Left lung (tissue), 14 donors: ENCODE measurements at regions of chr6 and their contacts with region 1.

Region 1: DNA sequence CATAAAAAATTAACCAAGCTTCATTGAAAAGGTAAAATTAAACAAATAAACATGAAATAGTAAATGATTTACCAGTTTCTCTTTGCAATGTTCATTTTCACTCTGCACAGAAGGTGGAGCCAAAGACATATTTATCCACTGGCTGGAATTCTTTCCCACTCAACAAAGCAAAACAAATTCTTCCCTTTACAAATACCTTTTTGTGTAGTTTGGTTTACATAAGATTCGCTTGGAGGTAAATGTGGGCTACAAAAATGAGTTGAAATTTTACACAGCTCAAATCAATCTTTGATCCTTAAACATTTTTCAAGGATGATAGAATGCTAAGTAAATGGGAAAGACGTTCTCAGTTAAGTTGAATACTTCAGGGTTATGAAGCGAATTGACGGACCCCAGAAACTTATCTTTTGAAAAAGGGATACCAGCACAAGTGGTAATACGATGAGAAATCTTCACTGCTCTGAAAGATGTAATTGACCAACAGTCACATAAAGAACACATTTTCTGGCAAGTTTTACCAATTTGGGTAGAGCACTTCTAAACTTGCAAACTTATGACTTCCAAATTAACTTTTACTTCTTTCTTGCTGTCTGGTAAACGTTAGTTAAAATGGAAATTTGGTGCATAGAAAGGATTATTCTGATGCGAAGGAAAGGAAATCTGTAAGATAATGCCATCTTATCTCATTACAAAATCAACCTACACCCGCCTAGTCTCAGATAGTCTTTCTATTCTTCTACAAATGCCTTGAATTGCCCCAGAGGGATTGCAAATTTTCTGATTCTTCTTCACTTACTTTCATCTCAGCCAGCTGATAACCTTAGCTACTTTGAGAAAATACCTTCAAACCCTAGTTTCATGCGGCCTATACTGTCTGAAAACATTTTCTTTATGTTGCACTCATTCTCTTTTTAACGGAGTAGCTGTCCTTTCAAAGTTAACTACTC is 4.7 kb upstream of the GJA1 start:
- DNase-seq: peak in 2 of 4 donors; percentile 42 to 57
- ATAC-seq: peak; percentile 75
- H3K4me3 ChIP-seq: no peak overlapping the region
- H3K27ac ChIP-seq: no peak overlapping the region
- H3K4me1 ChIP-seq: no peaks in the 10 kb centered on the region
- H3K27me3 ChIP-seq: peaks cover 0 to 8% of the 10 kb centered on the region in 2 donors
- CTCF ChIP-seq: peak; percentile 46 to 61

Region 2: GRCh38 chr6:121020656-121021055 is 410.1 kb before region 1 on chr6:
- intact Hi-C with region 1: no loop called
- DNase-seq: no peak
- ATAC-seq: no peak
- H3K4me3 ChIP-seq: no peak overlapping the region
- H3K27ac ChIP-seq: no peak overlapping the region
- H3K4me1 ChIP-seq: no peaks in the 10 kb centered on the region
- H3K27me3 ChIP-seq: no peaks in the 10 kb centered on the region
- CTCF ChIP-seq: no peak

Region 3: DNA sequence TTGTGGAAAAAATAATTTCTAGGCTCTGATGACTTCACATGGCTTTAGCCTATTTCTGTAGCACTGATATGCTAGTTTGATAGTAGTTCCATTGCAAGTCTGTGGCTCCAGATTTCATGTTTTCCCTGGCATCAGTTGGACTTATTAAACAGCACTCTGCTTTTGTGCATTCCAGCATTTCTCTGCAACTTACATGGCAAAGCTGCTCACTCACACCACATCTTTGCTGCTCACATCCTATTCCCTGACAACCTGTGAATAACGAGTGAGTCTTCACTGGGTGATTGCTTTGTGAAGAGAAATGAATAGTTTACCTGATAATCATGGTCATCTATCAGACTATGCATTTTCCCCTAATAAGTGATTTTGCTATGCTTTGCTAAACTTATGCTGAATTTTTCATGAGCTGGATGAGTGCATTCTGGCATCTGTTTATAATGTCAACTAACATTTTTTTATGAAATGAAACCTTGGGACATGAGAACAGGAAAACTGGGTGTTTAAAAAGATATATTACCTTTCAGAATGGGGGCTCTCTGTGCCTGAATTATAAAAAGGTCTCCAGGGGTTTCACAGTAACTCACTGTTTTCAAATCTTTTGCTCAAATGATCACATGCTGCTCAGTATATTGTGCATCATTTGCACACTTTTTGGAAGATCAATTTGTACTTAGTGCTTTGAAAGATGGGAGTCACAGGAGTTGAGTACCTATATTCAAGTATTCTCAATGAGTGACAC is 398.4 kb before region 1 on chr6:
- intact Hi-C with region 1: no loop called
- DNase-seq: no peak
- ATAC-seq: no peak
- H3K4me3 ChIP-seq: no peak overlapping the region
- H3K27ac ChIP-seq: no peak overlapping the region
- H3K4me1 ChIP-seq: no peaks in the 10 kb centered on the region
- H3K27me3 ChIP-seq: no peaks in the 10 kb centered on the region
- CTCF ChIP-seq: no peak

Region 4: DNA sequence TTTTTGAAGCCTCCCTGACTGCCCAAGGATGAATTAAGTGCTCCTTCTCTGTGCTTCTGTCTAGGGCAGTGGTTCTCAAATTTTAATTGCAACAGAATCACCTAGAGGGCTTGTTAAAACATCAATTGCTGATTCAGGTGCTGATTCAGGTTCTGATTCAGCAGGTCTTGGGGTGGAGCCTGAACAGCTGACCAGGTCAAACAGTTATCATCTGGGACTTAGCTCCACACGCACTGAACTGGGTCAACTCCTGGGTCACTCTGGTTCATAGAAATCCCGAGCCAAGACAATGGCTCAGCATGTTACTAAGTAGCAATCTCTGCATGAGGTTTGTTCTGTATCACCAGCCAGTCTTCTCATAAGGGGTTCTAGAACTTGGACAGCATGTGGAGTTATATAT is 197.0 kb after region 1 on chr6:
- intact Hi-C with region 1: no loop called
- DNase-seq: no peak
- ATAC-seq: no peak
- H3K4me3 ChIP-seq: no peak overlapping the region
- H3K27ac ChIP-seq: no peak overlapping the region
- H3K4me1 ChIP-seq: no peaks in the 10 kb centered on the region
- H3K27me3 ChIP-seq: no peaks in the 10 kb centered on the region
- CTCF ChIP-seq: no peak

Region 5: DNA sequence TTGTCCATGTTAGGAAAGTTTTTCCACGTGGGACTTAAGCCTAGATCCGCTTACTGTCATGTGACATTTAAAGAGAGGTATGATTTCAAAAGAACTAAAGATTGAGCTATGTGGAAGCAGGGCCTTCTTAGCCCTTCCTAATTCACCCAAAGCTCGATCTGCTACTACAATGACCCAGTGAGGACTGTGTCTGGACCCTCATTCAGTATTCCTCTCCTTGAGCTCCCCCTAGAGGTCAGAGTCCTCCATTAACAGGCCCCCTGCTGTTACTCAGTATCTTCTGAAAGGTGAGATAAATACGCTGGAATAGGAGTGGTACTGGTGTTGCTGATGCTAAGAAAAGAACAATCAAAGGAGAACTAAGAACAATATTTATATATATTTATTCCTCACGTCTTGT is 418.7 kb after region 1 on chr6:
- intact Hi-C with region 1: loop called in 1 of 2 experiments (anchors 5 kb)
- DNase-seq: peak in 2 of 4 donors; percentile 37 to 69
- ATAC-seq: peak; percentile 97
- H3K4me3 ChIP-seq: no peak overlapping the region
- H3K27ac ChIP-seq: no peak overlapping the region
- H3K4me1 ChIP-seq: no peaks in the 10 kb centered on the region
- H3K27me3 ChIP-seq: no peaks in the 10 kb centered on the region
- CTCF ChIP-seq: peak; percentile 50 to 66